Activated CD8-positive, alpha-beta T cell treated with anti-CD3 and anti-CD28 coated beads for 36 hours (primary cell): ENCODE measurements at regions of chr1 and their contacts with region 1.

Region 1: DNA sequence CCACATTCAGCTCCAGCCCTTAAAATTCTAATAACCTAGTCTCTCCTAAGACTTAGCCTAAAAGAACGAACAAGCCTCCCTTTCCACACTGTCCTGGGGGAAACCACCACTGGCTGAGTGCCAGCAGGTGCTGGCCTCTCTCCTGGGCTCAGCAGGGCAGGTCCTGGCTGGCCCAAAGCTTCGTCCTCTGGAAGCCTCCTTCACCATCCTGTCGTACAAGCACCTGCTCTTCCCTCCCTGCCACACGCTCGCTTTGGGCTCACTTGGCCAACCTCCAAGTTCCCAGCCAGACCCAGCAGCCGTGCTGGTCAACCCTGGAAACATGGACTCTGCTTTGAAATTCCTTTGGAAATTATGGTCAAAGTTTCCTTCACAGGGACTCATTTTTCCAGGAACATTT is 58.2 kb upstream of the SLC25A33 start:
- DNase-seq: no peak
- ATAC-seq: no peak
- H3K4me3 Mint-ChIP-seq: no peak overlapping the region
- H3K27ac Mint-ChIP-seq: no peak overlapping the region
- H3K4me1 Mint-ChIP-seq: no peaks in the 10 kb centered on the region
- H3K27me3 Mint-ChIP-seq: peaks cover 2% of the 10 kb centered on the region
- CTCF ChIP-seq: no peak

Region 2: GRCh38 chr1:9270290-9270883 is 210.7 kb before region 1 on chr1:
- CTCF ChIA-PET with region 1: interaction called, 11 read pairs
- POLR2A ChIA-PET with region 1: no interaction called
- intact Hi-C with region 1: no loop called
- DNase-seq: no peak
- ATAC-seq: no peak
- H3K4me3 Mint-ChIP-seq: no peak overlapping the region
- H3K27ac Mint-ChIP-seq: no peak overlapping the region
- H3K4me1 Mint-ChIP-seq: peaks cover 5% of the 10 kb centered on the region
- H3K27me3 Mint-ChIP-seq: no peaks in the 10 kb centered on the region
- CTCF ChIP-seq: no peak

Region 3: GRCh38 chr1:9438431-9439073 is 42.5 kb before region 1 on chr1:
- CTCF ChIA-PET with region 1: no interaction called
- POLR2A ChIA-PET with region 1: no interaction called
- intact Hi-C with region 1: no loop called
- DNase-seq: no peak
- ATAC-seq: no peak
- H3K4me3 Mint-ChIP-seq: no peak overlapping the region
- H3K27ac Mint-ChIP-seq: no peak overlapping the region
- H3K4me1 Mint-ChIP-seq: no peaks in the 10 kb centered on the region
- H3K27me3 Mint-ChIP-seq: peaks cover 5% of the 10 kb centered on the region
- CTCF ChIP-seq: no peak

Region 4: DNA sequence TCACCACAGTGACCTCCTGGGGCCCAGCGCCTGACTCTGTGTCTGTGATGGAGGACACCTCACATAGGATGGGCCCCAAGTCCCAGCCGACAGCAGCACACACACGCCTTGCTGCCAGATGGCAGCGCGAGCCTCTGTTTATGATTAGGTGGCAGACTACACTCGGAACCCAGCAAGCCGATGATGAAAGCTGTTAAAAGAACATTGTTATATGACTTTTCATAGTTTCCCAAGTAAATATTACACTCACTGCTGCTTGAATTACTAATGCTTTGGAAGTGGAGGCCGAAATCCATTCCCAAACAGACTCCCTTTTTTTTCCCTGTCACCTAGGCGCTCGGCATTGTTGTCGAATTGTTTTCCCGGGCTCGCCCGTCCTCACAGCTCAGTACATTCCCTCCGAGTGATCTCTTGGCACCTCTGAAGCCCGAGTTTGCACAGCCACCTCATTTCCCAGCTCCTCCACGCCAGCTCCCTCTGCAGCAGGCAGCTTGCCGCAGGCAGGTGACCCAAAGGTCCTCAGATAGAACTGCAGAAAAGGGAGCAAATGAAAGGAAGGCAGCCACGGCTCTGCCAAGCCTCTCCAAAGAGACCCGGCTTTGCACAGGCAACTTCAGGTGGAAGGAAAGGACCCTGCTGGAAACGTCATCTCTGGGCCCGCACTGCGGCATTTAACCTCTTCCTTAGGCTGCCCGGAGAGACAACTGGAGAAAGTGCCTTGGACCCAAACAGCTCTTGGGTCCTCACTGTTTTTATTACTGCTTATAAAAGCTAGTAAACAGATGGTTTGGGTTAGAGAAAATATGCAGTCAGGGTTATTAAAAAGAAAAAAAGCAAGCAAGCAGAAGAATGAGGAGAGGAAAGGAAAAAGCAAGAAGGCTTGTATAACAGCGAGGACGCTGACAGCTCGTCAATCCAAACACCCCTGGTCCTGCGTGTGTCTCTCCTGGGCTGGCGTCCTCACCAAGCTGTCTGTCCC is 14.0 kb before region 1 on chr1:
- CTCF ChIA-PET with region 1: no interaction called
- POLR2A ChIA-PET with region 1: no interaction called
- intact Hi-C with region 1: no loop called
- DNase-seq: no peak
- ATAC-seq: no peak
- H3K4me3 Mint-ChIP-seq: no peak overlapping the region
- H3K27ac Mint-ChIP-seq: no peak overlapping the region
- H3K4me1 Mint-ChIP-seq: no peaks in the 10 kb centered on the region
- H3K27me3 Mint-ChIP-seq: peaks cover 7% of the 10 kb centered on the region
- CTCF ChIP-seq: no peak